Transverse colon (tissue), 4 donors: ENCODE measurements at regions of chr6 and their contacts with region 1.

Region 1: DNA sequence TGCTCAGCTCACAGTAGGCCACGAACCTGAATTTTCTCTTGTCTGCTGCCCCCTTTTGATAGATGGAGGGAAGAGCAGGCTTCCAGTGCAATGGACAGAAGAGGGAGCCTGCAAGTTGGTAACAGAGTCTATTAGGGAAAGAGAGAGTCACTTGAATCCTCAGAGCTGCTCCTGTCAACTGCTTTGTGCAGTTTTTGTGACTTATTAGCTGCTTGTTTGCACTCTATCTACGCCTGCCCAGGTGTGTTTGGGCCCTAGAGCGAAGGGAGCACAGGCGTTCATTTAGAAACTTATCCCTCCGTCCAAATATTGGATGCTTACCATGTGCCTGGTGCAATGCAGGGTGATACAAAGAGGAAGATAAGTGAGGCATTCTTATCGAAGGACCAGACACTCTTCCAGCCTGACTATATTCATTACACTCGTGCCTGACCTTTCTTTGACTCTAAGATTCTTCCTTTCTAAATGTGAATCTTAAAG is 11.6 kb upstream of the SLC2A12 start:
- DNase-seq: peak; percentile 71
- H3K4me3 ChIP-seq: no peak overlapping the region
- H3K27ac ChIP-seq: no peak overlapping the region
- H3K4me1 ChIP-seq: peaks cover 0 to 7% (median 2%) of the 10 kb centered on the region in 4 donors
- H3K27me3 ChIP-seq: no peaks in the 10 kb centered on the region
- CTCF ChIP-seq: peak; percentile 71 to 82 (median 80)
- EP300 ChIP-seq: no peak
- POLR2A ChIP-seq: no peak

Region 2: DNA sequence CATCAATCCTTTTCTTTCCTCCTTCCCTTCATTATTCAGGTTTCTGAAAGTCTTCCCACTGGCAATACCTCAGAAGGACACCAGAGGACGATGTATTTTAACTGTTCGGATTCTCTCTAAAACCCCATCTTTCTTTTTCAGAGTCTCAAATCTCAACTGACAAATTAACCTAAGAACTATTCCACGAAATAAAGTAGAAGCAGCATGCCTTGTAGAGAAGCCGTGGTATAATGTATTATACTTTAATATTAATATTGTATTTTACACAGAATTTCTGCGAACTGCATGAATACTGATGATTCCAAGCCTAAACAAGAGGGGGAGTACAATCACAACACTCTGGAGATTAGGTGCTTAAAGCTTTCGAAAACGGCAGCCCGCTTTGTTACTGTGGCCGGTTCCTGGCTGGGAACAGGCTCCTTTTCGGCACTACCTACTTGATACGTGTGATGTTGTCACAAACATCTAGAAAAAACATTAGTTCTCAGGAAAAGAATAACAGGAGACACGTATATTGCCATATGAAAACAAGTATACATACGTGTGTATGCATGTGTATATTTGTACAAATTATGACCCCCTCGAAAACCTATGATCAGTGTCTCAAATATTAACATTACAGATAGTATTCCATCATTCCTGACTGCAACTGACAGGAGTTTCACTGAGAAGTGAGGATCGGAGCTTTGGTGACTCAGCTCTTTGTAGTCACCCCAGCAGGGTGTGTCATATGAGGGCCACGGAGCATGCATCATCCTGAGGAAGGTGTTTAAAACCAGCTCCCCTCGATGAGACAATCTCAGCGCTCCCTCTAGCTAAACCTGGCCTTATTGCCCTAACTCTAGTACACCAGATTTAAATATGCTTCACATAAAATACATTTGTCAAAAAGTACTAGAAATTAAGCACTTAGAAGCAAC is 494.8 kb before region 1 on chr6:
- in situ Hi-C with region 1: loop called in 1 of 4 experiments (anchors 25 kb)
- intact Hi-C with region 1: no loop called
- DNase-seq: peak; percentile 14
- H3K4me3 ChIP-seq: peak overlapping the region in 3 of 4 donors; percentile 1 to 37 (median 8)
- H3K27ac ChIP-seq: peak overlapping the region in 3 of 4 donors; percentile 38 to 61 (median 46)
- H3K4me1 ChIP-seq: peaks cover 0 to 6% (median 0%) of the 10 kb centered on the region in 4 donors
- H3K27me3 ChIP-seq: peaks cover 5% of the 10 kb centered on the region
- CTCF ChIP-seq: peak; percentile 69 to 92 (median 81)
- EP300 ChIP-seq: no peak
- POLR2A ChIP-seq: no peak

Region 3: DNA sequence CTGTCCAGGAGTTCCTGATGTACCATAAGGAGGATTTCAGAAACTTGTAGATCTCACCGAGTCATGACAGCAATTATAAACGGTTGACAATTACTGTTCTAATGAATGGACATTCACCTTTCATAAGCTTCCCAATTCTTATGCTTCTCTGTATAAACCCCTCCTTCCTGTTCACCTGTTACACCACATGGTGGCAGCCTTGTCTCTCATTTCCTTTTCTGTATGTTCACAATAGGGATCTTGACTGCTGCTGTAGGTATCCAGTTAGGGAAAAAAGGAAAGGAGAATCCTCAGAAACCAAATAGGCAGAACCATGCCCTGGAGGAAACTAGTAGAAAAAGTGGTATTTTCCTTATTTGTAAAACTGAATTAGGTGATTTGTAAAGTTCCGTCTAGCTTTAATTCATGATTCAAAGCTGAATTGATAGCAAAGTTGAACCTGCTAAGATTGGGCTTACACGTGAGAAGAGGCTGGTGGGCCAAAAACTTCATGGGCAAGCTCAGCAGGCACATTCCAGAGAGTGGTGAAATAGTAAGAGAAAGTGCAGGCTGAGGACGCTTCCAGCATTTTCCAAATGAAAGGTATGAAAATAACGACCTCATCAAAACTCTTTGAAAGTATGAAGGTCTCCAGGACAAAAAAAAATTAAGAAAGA is 139.9 kb before region 1 on chr6:
- in situ Hi-C with region 1: loop called in 2 of 4 experiments (anchors 10 kb)
- intact Hi-C with region 1: loop called (anchors 10 kb)
- DNase-seq: peak; percentile 67
- H3K4me3 ChIP-seq: no peak overlapping the region
- H3K27ac ChIP-seq: no peak overlapping the region
- H3K4me1 ChIP-seq: peaks cover 0 to 4% (median 0%) of the 10 kb centered on the region in 4 donors
- H3K27me3 ChIP-seq: peaks cover 9% of the 10 kb centered on the region
- CTCF ChIP-seq: peak; percentile 81 to 87 (median 81)
- EP300 ChIP-seq: no peak
- POLR2A ChIP-seq: no peak

Region 4: DNA sequence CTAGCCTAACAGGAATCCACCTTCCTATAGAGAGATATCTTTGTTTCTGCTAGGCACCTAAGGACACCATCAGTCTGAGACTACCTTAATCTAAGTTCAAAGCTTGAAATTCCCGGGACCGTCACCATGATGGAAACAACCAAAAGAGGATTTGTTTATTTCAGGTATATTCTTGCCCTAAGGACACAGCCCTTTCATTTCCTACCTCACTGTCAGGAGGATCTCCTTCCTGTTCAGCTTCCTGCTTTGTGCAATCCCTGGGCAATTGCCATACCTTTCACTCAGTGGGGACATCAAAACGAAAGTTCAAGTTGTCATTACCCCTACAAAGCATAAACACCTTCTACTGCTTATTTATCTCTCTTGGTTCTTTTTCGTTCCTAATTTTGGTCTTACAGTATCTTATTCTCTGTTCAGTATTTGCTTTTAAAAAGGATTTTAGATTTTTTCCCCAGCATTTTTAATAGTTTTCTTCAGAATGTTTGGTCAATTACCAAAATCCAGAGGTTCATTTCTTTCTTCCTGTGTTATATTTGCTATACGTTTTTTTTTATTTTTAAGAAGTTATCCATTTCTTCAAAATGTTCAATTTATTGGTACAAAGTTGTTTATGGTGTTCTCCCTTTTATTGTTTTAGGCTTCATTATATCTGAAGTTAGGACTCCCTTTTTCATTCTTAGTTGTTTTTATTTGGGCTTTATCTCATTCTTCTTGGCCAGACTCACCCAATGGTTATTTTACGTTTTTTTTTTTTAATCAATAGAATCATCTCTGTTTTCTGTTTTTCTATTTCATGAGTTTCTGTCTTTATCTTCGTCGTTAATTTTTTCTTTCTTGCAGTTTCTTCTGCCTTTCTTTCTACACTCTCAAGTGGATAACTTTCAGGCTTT is 124.0 kb before region 1 on chr6:
- in situ Hi-C with region 1: loop called in 1 of 4 experiments (anchors 10 kb)
- intact Hi-C with region 1: no loop called
- DNase-seq: no peak
- H3K4me3 ChIP-seq: no peak overlapping the region
- H3K27ac ChIP-seq: no peak overlapping the region
- H3K4me1 ChIP-seq: no peaks in the 10 kb centered on the region
- H3K27me3 ChIP-seq: no peaks in the 10 kb centered on the region
- CTCF ChIP-seq: no peak
- EP300 ChIP-seq: no peak
- POLR2A ChIP-seq: no peak

Region 5: GRCh38 chr6:133973109-133973971 is 90.7 kb before region 1 on chr6:
- in situ Hi-C with region 1: loop called in 3 of 4 experiments (anchors 10 kb)
- intact Hi-C with region 1: loop called (anchors 5 kb)
- DNase-seq: no peak
- H3K4me3 ChIP-seq: no peak overlapping the region
- H3K27ac ChIP-seq: no peak overlapping the region
- H3K4me1 ChIP-seq: peaks cover under 1 to 29% (median 14%) of the 10 kb centered on the region in 4 donors
- H3K27me3 ChIP-seq: no peaks in the 10 kb centered on the region
- CTCF ChIP-seq: peak; percentile 72 to 80 (median 75)
- EP300 ChIP-seq: no peak
- POLR2A ChIP-seq: no peak

Region 6: DNA sequence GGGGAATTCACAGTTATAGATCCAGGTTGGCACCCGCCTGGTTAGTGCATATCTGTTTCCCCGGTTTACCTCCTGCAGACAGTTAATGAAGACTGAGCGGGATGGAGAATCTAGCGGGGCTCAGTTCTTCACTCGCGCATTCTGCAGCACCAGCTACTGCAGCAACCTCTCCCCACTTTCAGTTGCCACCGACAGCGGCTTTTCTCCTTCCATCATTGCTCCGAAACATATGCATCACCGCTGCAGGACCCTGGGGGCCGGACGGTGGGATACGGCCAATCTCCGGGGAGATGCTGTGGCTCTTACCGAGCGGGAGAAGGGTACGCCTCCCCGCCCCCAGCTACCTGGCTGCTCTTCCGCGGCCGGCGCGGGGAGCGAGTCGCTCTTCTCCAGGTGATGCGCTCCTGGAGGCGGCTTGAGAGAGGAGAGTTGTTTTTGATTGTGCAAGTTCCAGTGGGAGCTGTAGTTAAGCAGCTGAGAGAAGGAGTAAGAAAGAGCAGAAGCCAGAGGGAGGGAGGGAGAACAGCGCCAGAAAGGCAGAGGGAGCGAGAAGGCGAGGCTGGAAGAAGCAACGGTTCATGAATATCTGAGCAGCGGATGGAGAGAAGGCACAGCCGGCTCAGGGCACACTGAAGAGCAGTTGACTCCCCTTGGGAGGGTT is 253.6 kb after region 1 on chr6 and contains the start of gene SGK1:
- in situ Hi-C with region 1: no loop called
- intact Hi-C with region 1: no loop called
- DNase-seq: no peak
- H3K4me3 ChIP-seq: peak within 1 kb of the TSS in 3 of 4 donors; percentile 23 to 50 (median 31)
- H3K27ac ChIP-seq: no peak within 1 kb of the TSS
- H3K4me1 ChIP-seq: peaks cover 0 to 12% (median 2%) of the 10 kb centered on the region in 4 donors
- H3K27me3 ChIP-seq: peaks cover 26% of the 10 kb centered on the region
- CTCF ChIP-seq: no peak
- EP300 ChIP-seq: no peak
- POLR2A ChIP-seq: no peak
- total RNA-seq, gene SGK1: 46.2 to 1,239 (median 876) TPM

Region 7: GRCh38 chr6:134809132-134809531 is 745.1 kb after region 1 on chr6:
- in situ Hi-C with region 1: no loop called
- intact Hi-C with region 1: no loop called
- DNase-seq: no peak
- H3K4me3 ChIP-seq: no peak overlapping the region
- H3K27ac ChIP-seq: no peak overlapping the region
- H3K4me1 ChIP-seq: no peaks in the 10 kb centered on the region
- H3K27me3 ChIP-seq: no peaks in the 10 kb centered on the region
- CTCF ChIP-seq: no peak
- EP300 ChIP-seq: no peak
- POLR2A ChIP-seq: no peak